Ascending aorta (tissue), 2 donors: ENCODE measurements at regions of chr16 and their contacts with region 1.

Region 1: GRCh38 chr16:87540945-87541877 is 48.4 kb upstream of the ZCCHC14 start:
- DNase-seq: peak; percentile 29 to 92
- H3K4me3 ChIP-seq: peak overlapping the region; percentile 48 to 62
- H3K27ac ChIP-seq: peak overlapping the region; percentile 96 to 98
- H3K4me1 ChIP-seq: peaks cover 6 to 42% of the 10 kb centered on the region in 2 donors
- H3K27me3 ChIP-seq: no peaks in the 10 kb centered on the region
- CTCF ChIP-seq: peak in 1 of 3 experiments; percentile 6

Region 2: DNA sequence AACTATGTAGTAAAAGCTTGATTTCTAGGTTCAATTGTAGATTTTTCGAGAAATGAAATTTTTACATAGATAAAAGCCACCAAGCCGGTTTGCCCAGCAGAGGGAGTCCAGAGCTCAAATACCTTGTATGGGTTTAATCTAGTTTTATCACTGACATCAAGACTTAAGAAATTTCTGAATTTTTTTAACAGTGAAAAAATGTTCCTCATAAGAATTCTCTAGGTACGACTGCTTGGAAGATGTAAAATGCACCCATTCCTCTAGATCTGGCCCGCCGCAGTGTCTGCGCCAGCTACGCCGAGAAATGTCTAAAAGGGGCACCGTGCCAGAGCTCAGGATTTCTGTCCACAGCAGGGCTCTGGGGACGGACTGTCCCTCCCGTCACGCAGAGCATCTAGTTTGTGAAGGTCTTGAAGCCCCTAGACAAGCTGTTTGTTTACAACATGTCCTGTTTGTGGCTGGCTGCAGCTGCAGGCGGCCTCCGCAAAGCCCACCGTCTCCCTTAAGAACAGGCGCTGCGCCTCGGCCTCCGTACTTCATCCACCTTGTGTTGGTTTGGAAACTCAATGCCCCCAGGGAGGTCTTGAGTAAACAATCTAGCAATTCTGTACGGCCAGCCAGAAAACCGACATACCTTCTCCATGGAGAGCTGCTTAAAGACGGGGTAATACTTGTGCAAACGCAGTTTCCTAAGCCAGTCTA is 124.2 kb before region 1 on chr16:
- intact Hi-C with region 1: loop called (anchors 2 kb)
- DNase-seq: no peak
- H3K4me3 ChIP-seq: no peak overlapping the region
- H3K27ac ChIP-seq: no peak overlapping the region
- H3K4me1 ChIP-seq: no peaks in the 10 kb centered on the region
- H3K27me3 ChIP-seq: no peaks in the 10 kb centered on the region
- CTCF ChIP-seq: peak; percentile 32 to 70 (median 57)

Region 3: DNA sequence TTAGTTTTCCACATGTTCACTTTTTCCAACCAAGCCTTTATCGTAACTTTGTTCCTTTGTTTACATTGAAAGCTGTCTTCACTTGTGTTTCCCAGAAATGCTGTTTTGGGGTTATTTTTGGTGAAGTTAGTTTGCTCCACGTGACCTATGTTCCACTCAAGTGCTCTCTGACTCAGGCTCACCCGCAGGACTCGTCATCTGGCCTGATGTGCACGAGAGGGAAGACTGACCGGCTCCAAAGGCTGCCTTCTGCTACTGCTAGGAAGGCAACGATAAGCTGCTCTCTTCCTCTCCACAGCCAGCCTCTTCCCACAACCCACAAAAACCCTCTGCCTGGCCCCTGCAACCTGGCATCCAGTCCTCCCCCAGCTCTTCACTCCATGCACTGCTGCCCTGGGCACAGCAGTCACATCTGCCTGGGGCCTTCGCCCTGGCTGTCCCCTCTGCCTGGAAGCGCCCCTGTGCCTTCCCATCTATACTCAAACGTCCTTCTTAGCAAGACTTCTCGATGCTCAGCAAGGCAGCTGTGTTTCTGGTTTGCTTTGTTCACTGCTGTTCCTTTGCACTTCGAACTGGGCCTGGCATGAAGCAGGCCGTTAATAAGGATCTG is 76.4 kb before region 1 on chr16:
- intact Hi-C with region 1: loop called (anchors 2 kb)
- DNase-seq: peak; percentile 85 to 95
- H3K4me3 ChIP-seq: peak overlapping the region; percentile 3 to 55
- H3K27ac ChIP-seq: peak overlapping the region; percentile 74 to 90
- H3K4me1 ChIP-seq: peaks cover 23 to 43% of the 10 kb centered on the region in 2 donors
- H3K27me3 ChIP-seq: no peaks in the 10 kb centered on the region
- CTCF ChIP-seq: no peak

Region 4: DNA sequence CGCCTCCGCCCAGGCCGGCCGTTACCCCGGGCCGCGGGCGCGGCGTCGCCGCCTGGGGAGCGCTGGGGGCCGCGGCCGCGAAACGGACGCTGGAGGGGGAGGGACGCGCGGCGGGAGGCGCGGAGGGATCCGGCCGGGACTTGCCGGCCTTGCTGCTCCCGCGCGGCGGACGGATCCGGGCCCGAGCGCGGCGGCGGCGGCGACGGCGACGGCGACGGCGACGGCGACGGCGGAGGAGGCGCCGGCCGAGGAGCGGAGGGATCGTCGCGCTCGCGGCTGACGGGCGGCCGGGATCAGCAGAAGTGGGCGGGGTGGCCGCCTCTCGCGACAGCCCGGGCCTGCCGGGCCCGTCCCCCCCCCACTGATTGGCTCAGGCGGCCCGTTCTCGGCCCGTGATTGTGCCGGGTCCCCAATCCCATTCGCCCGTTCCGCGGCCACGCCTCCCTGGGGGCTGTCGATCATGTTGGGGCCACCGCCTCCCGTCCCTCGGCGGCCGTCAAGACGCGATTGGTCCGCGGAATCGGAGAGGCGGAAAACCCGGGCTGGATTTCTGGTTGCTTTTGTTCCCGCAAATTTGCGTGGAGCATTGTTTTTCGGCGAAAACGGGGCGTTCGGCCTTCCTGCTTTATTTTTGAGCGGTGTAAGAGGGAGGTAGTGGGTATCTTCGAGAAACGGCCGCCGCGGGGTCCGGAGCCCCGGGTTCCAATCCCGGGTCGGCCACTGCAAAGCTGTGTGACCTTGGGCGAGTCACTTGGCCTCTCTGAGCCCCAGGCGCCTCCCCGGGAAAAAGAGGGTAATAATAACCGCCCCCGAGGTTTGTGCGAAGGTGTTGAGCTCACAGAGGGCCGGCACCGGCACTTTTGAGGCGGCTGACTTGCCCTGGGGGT is 48.2 kb before region 1 on chr16 and contains the start of gene ZCCHC14:
- intact Hi-C with region 1: loop called (anchors 1 kb)
- DNase-seq: peak; percentile 96 to 99
- H3K4me3 ChIP-seq: peak within 1 kb of the TSS; percentile 57 to 90
- H3K27ac ChIP-seq: peak within 1 kb of the TSS; percentile 21 to 72
- H3K4me1 ChIP-seq: peaks cover 8 to 22% of the 10 kb centered on the region in 2 donors
- H3K27me3 ChIP-seq: no peaks in the 10 kb centered on the region
- CTCF ChIP-seq: peak in 1 of 3 experiments; percentile 22
- total RNA-seq, gene ZCCHC14: 131 TPM

Region 5: DNA sequence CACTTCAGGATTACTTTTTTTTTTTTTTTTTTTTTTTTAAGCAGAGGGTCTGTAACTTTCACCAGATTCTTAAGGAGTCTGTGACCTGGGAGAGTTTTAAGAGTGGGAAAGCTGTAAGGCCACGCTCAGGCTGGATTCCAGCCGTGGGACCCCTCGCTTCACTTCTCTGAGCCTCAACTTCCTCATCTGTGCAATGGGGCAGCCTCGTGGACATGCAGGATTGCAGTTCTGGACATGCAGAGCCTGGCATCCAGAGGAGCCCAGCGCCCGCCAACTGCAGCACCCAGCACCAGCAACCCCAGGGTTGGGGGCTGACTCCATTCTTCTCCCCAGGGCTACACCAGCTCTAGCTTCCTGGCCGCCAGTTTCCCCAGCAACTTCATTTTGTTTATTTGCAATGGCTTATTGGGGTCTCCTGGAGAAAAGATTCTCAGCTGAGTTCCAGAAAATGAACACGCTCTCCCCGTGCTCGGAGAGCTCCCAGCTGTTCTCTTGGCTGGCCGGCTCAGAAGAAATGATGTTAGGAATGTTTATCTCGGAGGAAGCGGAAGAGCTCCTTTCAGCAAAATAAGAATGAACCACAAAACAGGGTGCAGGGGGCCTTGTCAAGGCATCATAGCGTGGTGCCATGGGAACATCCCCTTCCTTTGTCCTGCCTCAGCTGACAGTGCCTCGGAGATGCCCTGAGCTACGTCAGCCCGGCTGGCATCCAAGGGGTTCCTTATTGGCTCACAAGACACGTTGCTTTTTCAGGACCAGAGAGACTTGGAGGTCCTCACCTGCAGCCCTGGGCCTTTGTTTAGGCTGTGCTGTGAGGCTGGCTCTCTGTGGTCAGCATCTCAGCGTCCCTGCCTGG is 25.5 kb before region 1 on chr16:
- intact Hi-C with region 1: loop called (anchors 1 kb)
- DNase-seq: no peak
- H3K4me3 ChIP-seq: no peak overlapping the region
- H3K27ac ChIP-seq: peak overlapping the region; percentile 95 to 99
- H3K4me1 ChIP-seq: peaks cover 9 to 26% of the 10 kb centered on the region in 2 donors
- H3K27me3 ChIP-seq: no peaks in the 10 kb centered on the region
- CTCF ChIP-seq: no peak

Region 6: DNA sequence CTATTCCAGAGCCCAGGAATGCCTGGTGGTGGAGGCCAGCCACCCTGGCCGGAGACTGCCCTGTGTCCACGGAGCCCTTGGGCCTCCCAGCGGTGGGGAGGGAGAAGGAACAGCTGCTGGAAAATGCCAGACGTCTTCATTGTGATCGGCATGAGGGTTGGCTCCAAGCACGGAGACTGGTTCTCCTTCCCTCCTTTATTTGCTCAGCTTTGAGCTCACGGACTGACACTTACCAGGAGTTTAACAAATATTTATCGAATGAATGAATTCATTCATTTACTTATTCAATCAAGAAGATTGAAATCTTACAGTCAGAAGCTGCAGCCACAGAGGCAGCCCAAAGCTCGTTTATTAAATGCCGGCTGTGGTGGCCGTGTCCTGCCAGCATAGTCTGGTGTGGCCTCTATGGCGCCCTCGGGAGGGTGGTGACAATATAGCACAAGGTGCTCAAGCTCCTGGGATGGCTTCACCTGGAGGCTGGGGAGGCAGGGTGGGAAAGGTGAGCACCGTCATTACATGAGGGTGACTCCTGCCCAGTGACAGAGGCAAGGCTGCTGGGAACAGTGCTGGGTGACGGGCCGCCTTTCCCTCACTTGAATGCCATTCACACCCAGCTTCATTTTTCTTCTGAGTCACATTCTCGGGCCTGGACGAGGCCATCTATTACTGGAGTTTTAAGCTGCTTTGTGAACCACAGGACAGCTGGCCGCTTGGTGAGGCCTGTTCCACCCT is 30.1 kb after region 1 on chr16:
- intact Hi-C with region 1: loop called (anchors 2 kb)
- DNase-seq: peak; percentile 54 to 86
- H3K4me3 ChIP-seq: no peak overlapping the region
- H3K27ac ChIP-seq: peak overlapping the region; percentile 88 to 91
- H3K4me1 ChIP-seq: peaks cover 14 to 25% of the 10 kb centered on the region in 2 donors
- H3K27me3 ChIP-seq: no peaks in the 10 kb centered on the region
- CTCF ChIP-seq: peak; percentile 58 to 67 (median 59)

Region 7: GRCh38 chr16:87581833-87582203 is 40.6 kb after region 1 on chr16:
- intact Hi-C with region 1: loop called (anchors 5 kb)
- DNase-seq: peak; percentile 75 to 95
- H3K4me3 ChIP-seq: peak overlapping the region; percentile 29 to 52
- H3K27ac ChIP-seq: peak overlapping the region; percentile 97 to 98
- H3K4me1 ChIP-seq: peaks cover 10 to 21% of the 10 kb centered on the region in 2 donors
- H3K27me3 ChIP-seq: no peaks in the 10 kb centered on the region
- CTCF ChIP-seq: no peak

Region 8: GRCh38 chr16:87602821-87603683 is 61.8 kb after region 1 on chr16:
- intact Hi-C with region 1: no loop called
- DNase-seq: no peak
- H3K4me3 ChIP-seq: peak overlapping the region; percentile 33 to 54
- H3K27ac ChIP-seq: no peak overlapping the region
- H3K4me1 ChIP-seq: peaks cover 0 to 4% of the 10 kb centered on the region in 2 donors
- H3K27me3 ChIP-seq: peaks cover 22% of the 10 kb centered on the region
- CTCF ChIP-seq: no peak